AG04449 (cell line): ENCODE measurements at regions of chr13 and their contacts with region 1.

Region 1: GRCh38 chr13:31236211-31236786 is 36.5 kb downstream of the B3GLCT start:
- DNase-seq: peak; percentile 17
- H3K4me3 ChIP-seq: no peak overlapping the region
- CTCF ChIP-seq: peak; percentile 45

Region 2: DNA sequence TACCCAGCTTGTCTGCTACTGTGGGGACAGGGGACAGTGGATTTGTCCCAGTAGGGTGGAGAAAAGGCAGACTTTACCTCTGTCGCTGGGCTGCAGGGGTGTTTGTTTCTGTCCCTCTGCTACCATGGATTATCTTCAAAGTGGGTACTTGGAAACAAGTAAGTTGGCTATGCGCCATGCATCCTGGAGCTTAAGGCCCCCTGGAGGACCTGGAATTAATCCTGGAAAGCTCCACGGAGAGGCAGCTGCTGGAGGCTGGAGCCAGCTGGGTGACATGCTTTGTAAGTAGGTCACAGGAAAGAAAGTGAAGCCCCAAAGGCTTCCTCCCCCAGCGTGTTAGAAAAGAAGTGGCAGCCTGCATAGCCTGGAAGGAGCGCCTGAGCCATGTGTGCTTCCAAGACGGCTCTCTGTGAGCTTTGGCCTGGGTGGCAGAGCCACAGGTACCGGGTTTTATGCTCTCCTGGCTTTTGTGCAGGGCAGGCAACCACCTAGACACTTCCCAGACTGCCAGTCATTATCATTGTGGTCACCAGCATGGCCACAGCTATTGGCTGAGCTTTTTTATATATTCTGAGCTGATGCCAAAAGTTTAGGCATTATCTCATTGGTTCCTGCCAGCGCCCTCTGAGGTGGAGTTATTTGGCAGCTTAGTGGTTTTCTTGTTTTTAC is 27.0 kb before region 1 on chr13:
- CTCF ChIA-PET with region 1: interaction called, 12 read pairs
- POLR2A ChIA-PET with region 1: no interaction called
- DNase-seq: no peak
- H3K4me3 ChIP-seq: no peak overlapping the region; the same call in 1 of the 2 replicates
- CTCF ChIP-seq: no peak

Region 3: GRCh38 chr13:31250435-31250834 is 14.1 kb after region 1 on chr13:
- CTCF ChIA-PET with region 1: interaction called, 102 read pairs
- POLR2A ChIA-PET with region 1: no interaction called
- DNase-seq: no peak
- H3K4me3 ChIP-seq: no peak overlapping the region
- CTCF ChIP-seq: no peak

Region 4: GRCh38 chr13:31409678-31410356 is 173.5 kb after region 1 on chr13:
- CTCF ChIA-PET with region 1: interaction called, 74 read pairs
- POLR2A ChIA-PET with region 1: no interaction called
- DNase-seq: no peak
- H3K4me3 ChIP-seq: no peak overlapping the region
- CTCF ChIP-seq: no peak

Region 5: DNA sequence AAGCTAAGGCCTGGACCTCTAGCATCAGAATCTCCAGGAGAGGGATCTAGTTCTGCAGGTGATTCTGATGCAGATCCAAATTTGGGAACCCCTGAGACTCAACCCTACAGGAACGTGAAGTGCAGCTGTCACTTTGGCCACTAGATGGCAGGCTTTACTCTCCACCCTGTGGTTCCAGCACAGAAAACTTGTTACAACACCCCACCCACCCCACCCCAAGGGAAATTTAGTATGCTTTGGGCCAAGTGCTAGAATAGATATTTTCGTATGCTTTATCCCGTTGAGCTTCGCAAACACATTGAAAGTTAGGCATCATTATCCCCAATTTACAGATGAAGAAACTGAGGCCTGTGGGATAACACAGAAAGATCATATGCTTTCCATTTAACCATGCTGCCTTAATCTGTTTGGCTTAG is 195.4 kb after region 1 on chr13:
- CTCF ChIA-PET with region 1: interaction called, 419 read pairs
- POLR2A ChIA-PET with region 1: no interaction called
- DNase-seq: no peak
- H3K4me3 ChIP-seq: no peak overlapping the region
- CTCF ChIP-seq: peak; percentile 81

Region 6: DNA sequence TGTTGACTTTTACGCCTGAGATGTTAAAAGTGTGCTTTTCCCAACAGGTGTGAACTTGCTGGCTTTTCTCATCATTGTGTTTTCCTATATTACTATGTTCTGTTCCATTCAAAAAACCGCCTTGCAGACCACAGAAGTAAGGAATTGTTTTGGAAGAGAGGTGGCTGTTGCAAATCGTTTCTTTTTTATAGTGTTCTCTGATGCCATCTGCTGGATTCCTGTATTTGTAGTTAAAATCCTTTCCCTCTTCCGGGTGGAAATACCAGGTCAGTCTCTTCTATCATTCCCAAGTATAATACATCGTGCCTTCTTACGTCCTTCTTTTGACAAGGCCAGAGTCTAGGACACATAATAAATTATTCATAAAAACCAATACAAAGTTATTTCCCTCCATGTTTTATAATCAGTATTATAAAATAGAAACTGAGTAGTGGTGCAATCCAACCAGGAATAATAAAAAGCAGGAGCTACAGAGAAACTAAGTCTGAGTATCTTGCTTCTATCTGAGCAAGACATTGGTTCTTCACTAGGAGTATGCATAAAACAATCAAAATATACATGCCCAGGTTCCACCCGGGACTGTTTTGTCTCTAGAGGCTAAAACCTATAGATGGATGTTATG is 561.0 kb after region 1 on chr13:
- CTCF ChIA-PET with region 1: interaction called, 29 read pairs
- POLR2A ChIA-PET with region 1: no interaction called
- DNase-seq: no peak
- H3K4me3 ChIP-seq: no peak overlapping the region
- CTCF ChIP-seq: peak; percentile 27